ENCODE measurements at regions of chr9 and their contacts with region 1.

Region 1: GRCh38 chr9:83505282-83505681 is 32.9 kb downstream of the FRMD3 start:
- DNase-seq: no peak
- H3K4me3 ChIP-seq: no peak overlapping the region
- H3K27ac ChIP-seq: no peak overlapping the region
- H3K4me1 ChIP-seq: no peaks in the 10 kb centered on the region
- H3K27me3 ChIP-seq: no peaks in the 10 kb centered on the region
- CTCF ChIP-seq: no peak

Region 2: GRCh38 chr9:83572524-83572923 is 67.2 kb after region 1 on chr9:
- CTCF ChIA-PET with region 1: no interaction called
- POLR2A ChIA-PET with region 1: interaction called, 10 read pairs
- intact Hi-C with region 1: no loop called
- DNase-seq: no peak
- H3K4me3 ChIP-seq: no peak overlapping the region
- H3K27ac ChIP-seq: no peak overlapping the region
- H3K4me1 ChIP-seq: peaks cover 25% of the 10 kb centered on the region
- H3K27me3 ChIP-seq: no peaks in the 10 kb centered on the region
- CTCF ChIP-seq: no peak

Region 3: DNA sequence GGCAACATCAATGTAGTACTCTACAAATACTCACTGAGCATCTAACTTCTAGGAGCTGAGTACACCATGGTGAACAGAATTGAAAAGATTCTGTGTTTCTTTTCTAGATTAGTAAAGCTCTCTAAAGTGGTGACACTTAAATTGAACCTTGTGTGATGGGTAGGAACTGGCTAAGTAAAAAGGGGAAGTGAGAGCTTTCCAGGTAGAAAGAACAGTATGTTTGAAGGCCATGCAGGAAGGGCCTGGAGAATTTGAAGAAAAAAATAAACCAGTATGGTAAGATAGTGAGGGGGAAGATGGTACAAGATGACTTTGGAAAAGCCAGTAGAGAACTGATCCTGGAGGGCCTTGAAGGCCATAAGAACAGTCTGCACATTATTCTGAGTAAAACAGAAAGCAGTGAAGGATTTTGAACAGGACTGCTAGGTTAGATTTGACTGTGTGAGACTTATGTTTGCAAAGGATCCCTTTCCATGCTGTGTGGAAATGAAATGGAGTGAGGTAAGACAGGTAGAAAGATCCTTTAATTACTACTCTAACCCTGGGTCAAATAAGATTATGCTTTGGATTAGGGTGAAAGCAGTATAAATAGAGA is 249.2 kb after region 1 on chr9:
- CTCF ChIA-PET with region 1: no interaction called
- POLR2A ChIA-PET with region 1: no interaction called
- intact Hi-C with region 1: no loop called
- DNase-seq: no peak
- H3K4me3 ChIP-seq: no peak overlapping the region
- H3K27ac ChIP-seq: no peak overlapping the region
- H3K4me1 ChIP-seq: no peaks in the 10 kb centered on the region
- H3K27me3 ChIP-seq: no peaks in the 10 kb centered on the region
- CTCF ChIP-seq: no peak

Measured in PC-9 (cell line).